ENCODE measurements at regions of chr1 and their contacts with region 1.

Region 1: GRCh38 chr1:85576642-85577418 is 3.7 kb upstream of the CCN1 start:
- DNase-seq: peak; percentile 87
- ATAC-seq: peak; percentile 70 to 78
- H3K4me3 ChIP-seq: peak overlapping the region; percentile 67
- H3K27ac ChIP-seq: peak overlapping the region; percentile 96
- H3K4me1 ChIP-seq: peaks cover 23% of the 10 kb centered on the region
- H3K27me3 ChIP-seq: peaks cover 15% of the 10 kb centered on the region
- CTCF ChIP-seq: peak; percentile 79

Region 2: GRCh38 chr1:85307987-85308832 is 268.6 kb before region 1 on chr1:
- intact Hi-C with region 1: loop called (anchors 5 kb)
- DNase-seq: peak; percentile 87
- ATAC-seq: peak; percentile 95 to 98
- H3K4me3 ChIP-seq: peak overlapping the region; percentile 8
- H3K27ac ChIP-seq: no peak overlapping the region
- H3K4me1 ChIP-seq: peaks cover 11% of the 10 kb centered on the region
- H3K27me3 ChIP-seq: no peaks in the 10 kb centered on the region
- CTCF ChIP-seq: peak; percentile 94

Measured in lower lobe of right lung (tissue), 2 donors.